OCI-LY7 (cell line): ENCODE measurements at regions of chrX and their contacts with region 1.

Region 1: DNA sequence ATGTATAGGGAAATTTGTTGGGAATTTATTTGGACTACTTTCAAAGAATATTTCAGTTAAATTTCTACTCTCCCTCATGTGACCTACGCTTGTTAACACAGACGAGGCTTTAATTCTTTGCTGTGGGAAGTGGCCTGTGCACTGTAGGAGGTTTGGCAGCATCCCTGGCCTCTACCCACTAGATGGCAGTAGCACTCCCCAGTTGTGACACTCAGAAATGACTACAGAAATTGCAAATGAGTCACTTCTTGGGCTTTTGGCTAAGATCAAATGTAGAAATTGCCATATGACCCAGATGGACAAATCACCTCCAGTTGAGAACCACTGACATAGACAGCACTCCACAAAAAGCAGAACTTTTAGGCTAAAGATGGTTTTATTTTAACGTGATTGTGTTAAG is 22.1 kb downstream of the PIR start:
- DNase-seq: peak; percentile 50
- H3K4me3 ChIP-seq: no peak overlapping the region
- H3K27ac ChIP-seq: no peak overlapping the region
- H3K4me1 ChIP-seq: peaks cover 2% of the 10 kb centered on the region
- CTCF ChIP-seq: peak; percentile 81

Region 2: GRCh38 chrX:15299941-15300851 is 170.8 kb before region 1 on chrX:
- CTCF ChIA-PET with region 1: interaction called, 3 read pairs
- POLR2A ChIA-PET with region 1: no interaction called
- intact Hi-C with region 1: loop called (anchors 2 kb)
- DNase-seq: peak; percentile 13
- H3K4me3 ChIP-seq: no peak overlapping the region
- H3K27ac ChIP-seq: no peak overlapping the region
- H3K4me1 ChIP-seq: no peaks in the 10 kb centered on the region
- CTCF ChIP-seq: peak; percentile 75

Region 3: DNA sequence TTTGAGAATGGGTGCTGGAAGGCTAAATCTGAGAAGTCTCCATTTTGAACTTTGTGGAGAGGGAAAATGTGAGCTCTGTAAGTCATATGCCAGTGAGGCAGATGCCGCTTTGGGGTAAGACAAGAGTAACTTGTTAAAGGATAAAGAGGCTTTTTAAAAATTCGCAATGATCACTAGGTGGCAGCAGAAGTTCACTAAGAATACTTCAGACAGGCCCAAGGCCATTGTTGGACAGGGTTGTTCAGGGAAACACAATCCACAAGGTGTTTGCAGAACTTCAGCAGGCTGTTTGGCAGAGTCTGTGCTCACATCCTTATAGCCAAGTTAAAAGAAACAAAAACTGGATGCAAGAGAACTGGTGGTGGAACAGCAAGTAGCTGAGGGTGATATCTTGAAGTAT is 122.0 kb before region 1 on chrX:
- CTCF ChIA-PET with region 1: interaction called, 17 read pairs
- POLR2A ChIA-PET with region 1: interaction called, 10 read pairs
- intact Hi-C with region 1: loop called (anchors 1 kb)
- DNase-seq: peak; percentile 61
- H3K4me3 ChIP-seq: no peak overlapping the region
- H3K27ac ChIP-seq: no peak overlapping the region
- H3K4me1 ChIP-seq: no peaks in the 10 kb centered on the region
- CTCF ChIP-seq: peak; percentile 70

Region 4: DNA sequence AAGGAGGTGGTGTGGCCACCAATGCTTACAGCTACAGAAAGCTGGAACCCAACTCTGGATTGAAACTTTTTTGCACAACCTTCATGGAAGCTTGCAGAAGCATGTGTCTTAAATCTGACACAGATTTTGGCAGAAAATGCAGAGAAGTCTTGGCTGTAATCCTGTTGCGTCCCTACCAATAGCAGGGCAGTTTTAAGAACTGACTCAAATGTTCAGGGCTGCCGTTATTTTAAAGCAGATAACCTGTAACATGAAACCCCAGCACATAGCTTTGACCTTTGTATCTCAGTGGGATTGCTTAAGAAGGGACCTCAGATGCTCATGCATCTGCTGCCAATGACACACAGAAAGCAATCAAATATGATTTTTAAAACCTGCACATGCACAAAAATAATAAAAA is 86.7 kb before region 1 on chrX and contains the start of gene VEGFD:
- CTCF ChIA-PET with region 1: interaction called, 10 read pairs
- POLR2A ChIA-PET with region 1: interaction called, 6 read pairs
- intact Hi-C with region 1: no loop called
- DNase-seq: no peak
- H3K4me3 ChIP-seq: no peak within 1 kb of the TSS
- H3K27ac ChIP-seq: no peak within 1 kb of the TSS
- H3K4me1 ChIP-seq: no peaks in the 10 kb centered on the region
- CTCF ChIP-seq: no peak
- total RNA-seq, gene VEGFD: not detected in 2 replicates

Region 5: GRCh38 chrX:15564981-15565579 is 94.1 kb after region 1 on chrX:
- CTCF ChIA-PET with region 1: no interaction called
- POLR2A ChIA-PET with region 1: interaction called, 3 read pairs
- intact Hi-C with region 1: loop called (anchors 1 kb)
- DNase-seq: peak; percentile 23
- H3K4me3 ChIP-seq: no peak overlapping the region
- H3K27ac ChIP-seq: no peak overlapping the region
- H3K4me1 ChIP-seq: no peaks in the 10 kb centered on the region
- CTCF ChIP-seq: peak; percentile 69